ENCODE measurements at regions of chr1 and their contacts with region 1.

Region 1: GRCh38 chr1:186155594-186155993 is 219.5 kb downstream of the TPR start:
- DNase-seq: peak; percentile 43
- H3K4me3 Mint-ChIP-seq: no peak overlapping the region
- H3K27ac Mint-ChIP-seq: no peak overlapping the region
- H3K4me1 Mint-ChIP-seq: peaks cover 12% of the 10 kb centered on the region
- H3K27me3 Mint-ChIP-seq: no peaks in the 10 kb centered on the region
- CTCF ChIP-seq: peak; percentile 39

Region 2: GRCh38 chr1:185813401-185813979 is 342.1 kb before region 1 on chr1:
- CTCF ChIA-PET with region 1: interaction called, 5 read pairs
- intact Hi-C with region 1: loop called (anchors 1 kb)
- DNase-seq: peak; percentile 48
- H3K4me3 Mint-ChIP-seq: no peak overlapping the region
- H3K27ac Mint-ChIP-seq: no peak overlapping the region
- H3K4me1 Mint-ChIP-seq: no peaks in the 10 kb centered on the region
- H3K27me3 Mint-ChIP-seq: no peaks in the 10 kb centered on the region
- CTCF ChIP-seq: peak; percentile 52

Region 3: GRCh38 chr1:186183219-186183618 is 27.6 kb after region 1 on chr1:
- CTCF ChIA-PET with region 1: no interaction called
- intact Hi-C with region 1: no loop called
- DNase-seq: peak; percentile 22
- H3K4me3 Mint-ChIP-seq: no peak overlapping the region
- H3K27ac Mint-ChIP-seq: no peak overlapping the region
- H3K4me1 Mint-ChIP-seq: peaks cover 14% of the 10 kb centered on the region
- H3K27me3 Mint-ChIP-seq: no peaks in the 10 kb centered on the region
- CTCF ChIP-seq: no peak

Measured in Calu3 (cell line).